RWPE1 (cell line): ENCODE measurements at regions of chr5 and their contacts with region 1.

Region 1: DNA sequence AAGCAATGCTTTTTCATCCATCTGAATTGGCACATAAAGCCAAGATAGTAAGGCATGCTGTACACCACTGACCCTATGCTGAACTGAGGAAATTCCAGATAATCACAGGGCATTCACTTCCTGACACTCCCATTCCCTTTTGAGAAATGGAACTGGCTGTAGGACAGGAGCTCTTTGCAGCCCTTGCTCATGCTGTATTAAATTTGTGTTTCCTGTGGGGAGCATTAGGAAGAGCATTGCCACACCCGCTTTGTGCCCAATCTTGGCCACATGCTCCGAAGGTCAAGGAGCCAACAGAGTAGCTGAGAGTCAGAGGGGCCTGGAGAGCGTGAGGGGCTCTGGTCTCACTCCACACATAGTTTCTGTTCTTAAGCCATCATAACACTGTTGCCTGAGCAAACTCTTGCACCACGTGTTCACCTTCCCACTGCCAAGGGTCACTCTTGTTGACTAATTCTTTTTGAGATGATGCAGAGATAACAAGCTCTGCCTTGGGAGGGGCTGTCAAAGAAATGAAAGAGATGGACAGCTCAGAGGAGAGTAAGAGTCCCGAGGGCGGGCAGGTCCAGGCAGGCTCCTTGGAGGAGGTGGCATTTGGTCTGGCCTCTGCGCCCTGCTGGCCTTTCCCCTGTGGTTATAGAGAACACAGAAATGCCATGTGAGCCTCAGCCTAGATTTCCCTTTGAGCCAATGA is 31.7 kb upstream of the ARAP3 start:
- DNase-seq: peak; percentile 93
- H3K27ac ChIP-seq: peak overlapping the region; percentile 82
- CTCF ChIP-seq: no peak

Region 2: DNA sequence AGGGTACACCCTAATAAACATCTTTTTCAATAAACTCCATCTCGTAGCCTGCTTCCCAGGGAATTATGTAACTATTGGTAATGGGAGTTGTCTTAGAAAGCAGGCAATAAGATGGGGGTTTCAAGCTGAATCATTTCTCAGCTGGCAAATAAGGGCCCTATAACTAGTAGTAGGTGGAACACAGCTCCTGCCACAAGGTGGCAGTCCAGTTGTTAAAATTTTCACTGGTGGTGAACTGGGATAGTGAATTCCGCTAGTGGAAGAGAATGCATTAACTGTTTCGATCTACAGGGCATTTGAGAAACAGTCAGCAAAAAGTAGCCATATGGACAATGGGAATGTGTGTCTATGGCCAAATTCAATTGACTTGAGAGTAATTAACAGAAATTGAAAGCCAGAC is 440.9 kb before region 1 on chr5:
- CTCF ChIA-PET with region 1: no interaction called
- POLR2A ChIA-PET with region 1: no interaction called
- DNase-seq: no peak
- H3K27ac ChIP-seq: no peak overlapping the region
- CTCF ChIP-seq: no peak

Region 3: DNA sequence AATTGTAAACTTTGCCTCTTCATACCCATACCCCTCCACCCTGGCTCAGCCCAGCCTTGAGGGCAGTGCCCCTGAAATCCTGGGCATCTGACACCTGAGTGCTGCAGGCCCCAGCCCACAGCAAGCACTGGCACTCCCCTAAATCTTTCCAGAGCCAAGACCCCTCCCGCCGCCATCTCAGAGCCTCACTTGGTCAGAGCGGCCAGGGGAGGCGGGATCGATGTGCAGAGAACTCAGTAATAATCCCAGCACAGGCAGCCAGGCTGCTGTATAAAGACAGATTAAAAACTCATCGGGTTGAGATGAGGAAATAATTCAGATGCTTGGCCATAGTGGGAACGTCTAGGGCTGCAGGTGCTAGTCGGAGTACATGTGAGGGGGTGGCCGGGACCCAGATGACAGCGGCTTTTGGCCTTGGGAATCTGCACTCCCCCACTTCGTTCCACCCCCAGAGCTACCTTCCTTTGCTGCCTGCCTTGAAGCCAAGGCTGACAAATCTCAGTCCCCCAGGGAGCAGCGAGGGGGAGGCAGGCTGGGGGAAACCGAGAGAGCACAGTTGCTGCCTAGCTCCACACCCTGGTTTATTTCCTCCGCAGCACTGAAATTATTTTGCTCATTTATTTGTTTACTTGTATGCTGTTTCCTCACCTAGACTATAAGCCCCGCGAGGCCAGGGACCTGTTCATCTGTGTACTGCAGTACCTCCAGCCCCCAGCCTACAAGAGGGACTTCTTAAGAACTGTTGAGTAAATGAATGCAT is 12.2 kb before region 1 on chr5:
- CTCF ChIA-PET with region 1: interaction called, 11 read pairs
- POLR2A ChIA-PET with region 1: no interaction called
- DNase-seq: no peak
- H3K27ac ChIP-seq: no peak overlapping the region
- CTCF ChIP-seq: no peak

Region 4: GRCh38 chr5:142233083-142234032 is 519.6 kb after region 1 on chr5:
- CTCF ChIA-PET with region 1: no interaction called
- POLR2A ChIA-PET with region 1: no interaction called
- DNase-seq: no peak
- H3K27ac ChIP-seq: no peak overlapping the region
- CTCF ChIP-seq: no peak